H1 (cell line): ENCODE measurements at regions of chr4 and their contacts with region 1.

Region 1: GRCh38 chr4:86934771-86935565 is at the start of gene AFF1:
- DNase-seq: peak; percentile 81 to 90
- H3K4me3 ChIP-seq: peak within 1 kb of the TSS; percentile 67 to 88 (median 80)
- H3K27ac ChIP-seq: peak within 1 kb of the TSS; percentile 81
- H3K4me1 ChIP-seq: peaks cover 0 to 5% (median 3%) of the 10 kb centered on the region in 4 experiments; a peak in 3 of 7 replicates
- H3K27me3 ChIP-seq: no peaks in the 10 kb centered on the region
- CTCF ChIP-seq: peak; percentile 33 to 39 (median 34)
- EP300 ChIP-seq: no peak; a peak in 1 of 3 replicates
- POLR2A ChIP-seq: peak; percentile 85 to 92
- RAD21 ChIP-seq: peak; percentile 12 to 41; a peak in 3 of 4 replicates
- total RNA-seq, gene AFF1: 85.4 and 85.5 TPM in 2 replicates

Region 2: GRCh38 chr4:86543560-86544309 is 391.2 kb before region 1 on chr4:
- CTCF ChIA-PET with region 1: no interaction called
- POLR2A ChIA-PET with region 1: no interaction called
- DNase-seq: no peak
- H3K4me3 ChIP-seq: no peak overlapping the region
- H3K27ac ChIP-seq: no peak overlapping the region
- H3K4me1 ChIP-seq: no peaks in the 10 kb centered on the region
- H3K27me3 ChIP-seq: no peaks in the 10 kb centered on the region
- CTCF ChIP-seq: no peak
- EP300 ChIP-seq: no peak
- POLR2A ChIP-seq: no peak
- RAD21 ChIP-seq: no peak

Region 3: GRCh38 chr4:86999136-86999643 is 64.2 kb after region 1 on chr4:
- CTCF ChIA-PET with region 1: interaction called, 6 read pairs
- POLR2A ChIA-PET with region 1: interaction called, 108 read pairs
- DNase-seq: no peak
- H3K4me3 ChIP-seq: no peak overlapping the region
- H3K27ac ChIP-seq: no peak overlapping the region
- H3K4me1 ChIP-seq: peaks cover 1 to 22% (median 7%) of the 10 kb centered on the region in 4 experiments; a peak in 4 of 7 replicates
- H3K27me3 ChIP-seq: no peaks in the 10 kb centered on the region
- CTCF ChIP-seq: no peak
- EP300 ChIP-seq: no peak
- POLR2A ChIP-seq: no peak
- RAD21 ChIP-seq: no peak